Sigmoid colon (tissue), 7 donors: ENCODE measurements at regions of chr4 and their contacts with region 1.

Region 1: DNA sequence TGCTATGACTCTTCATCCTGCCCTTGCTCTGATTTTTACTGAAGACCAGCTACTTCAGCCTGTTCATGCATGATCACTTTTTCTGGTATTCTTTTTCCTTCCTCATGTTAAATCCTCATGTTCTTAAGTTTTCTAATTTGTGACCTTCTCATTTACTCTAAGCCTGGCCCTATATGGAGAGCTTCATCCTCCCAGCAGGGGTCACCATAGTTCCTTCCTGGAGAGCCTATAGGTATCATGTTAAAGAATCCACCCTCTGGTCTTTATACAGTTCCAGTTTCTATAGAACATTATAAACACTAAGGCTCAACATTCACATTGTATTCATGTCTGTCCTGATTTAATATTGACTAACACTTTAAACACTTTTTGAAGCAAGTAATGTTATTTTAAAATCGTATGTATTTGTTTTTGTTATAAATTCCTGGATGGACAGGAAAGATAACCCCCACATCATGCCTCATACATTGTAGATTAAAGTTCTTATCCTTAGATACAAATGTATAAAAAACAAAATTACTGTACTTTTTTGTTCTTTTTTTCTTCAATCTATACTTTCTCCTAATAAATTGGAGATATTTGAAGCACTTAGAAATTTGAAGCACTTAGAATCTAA is 53.8 kb upstream of the OTUD4 start:
- DNase-seq: no peak
- H3K4me3 ChIP-seq: no peak overlapping the region
- H3K27ac ChIP-seq: no peak overlapping the region
- H3K4me1 ChIP-seq: no peaks in the 10 kb centered on the region
- H3K27me3 ChIP-seq: no peaks in the 10 kb centered on the region
- CTCF ChIP-seq: peak; percentile 7 to 74 (median 41)
- EP300 ChIP-seq: no peak
- POLR2A ChIP-seq: no peak

Region 2: GRCh38 chr4:145099653-145100052 is 134.5 kb before region 1 on chr4:
- intact Hi-C with region 1: no loop called
- DNase-seq: no peak
- H3K4me3 ChIP-seq: peak overlapping the region in 2 of 4 donors; percentile 69 to 81
- H3K27ac ChIP-seq: no peak overlapping the region
- H3K4me1 ChIP-seq: peaks cover 0 to 53% (median 43%) of the 10 kb centered on the region in 4 donors
- H3K27me3 ChIP-seq: no peaks in the 10 kb centered on the region
- CTCF ChIP-seq: no peak
- EP300 ChIP-seq: no peak
- POLR2A ChIP-seq: no peak

Region 3: DNA sequence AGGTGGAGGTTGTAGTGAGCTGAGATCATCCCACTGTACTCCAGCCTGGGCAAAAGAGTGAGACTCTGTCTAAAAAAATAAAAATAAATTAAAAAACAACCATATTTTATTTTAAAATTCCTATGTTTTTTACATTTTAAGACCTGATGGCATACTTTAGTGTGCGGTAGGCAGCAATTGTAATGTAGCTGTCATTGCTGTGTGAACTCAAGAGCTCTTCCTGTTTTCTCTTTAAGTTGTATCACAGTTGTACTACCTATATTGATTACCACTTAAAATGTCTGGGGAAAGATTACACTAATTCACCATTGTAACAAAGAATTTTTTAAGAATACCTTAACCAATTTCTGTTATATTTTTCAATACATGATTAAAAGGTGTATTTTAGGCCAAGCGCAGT is 108.8 kb before region 1 on chr4:
- intact Hi-C with region 1: no loop called
- DNase-seq: no peak
- H3K4me3 ChIP-seq: no peak overlapping the region
- H3K27ac ChIP-seq: no peak overlapping the region
- H3K4me1 ChIP-seq: no peaks in the 10 kb centered on the region
- H3K27me3 ChIP-seq: no peaks in the 10 kb centered on the region
- CTCF ChIP-seq: no peak
- EP300 ChIP-seq: no peak
- POLR2A ChIP-seq: no peak

Region 4: GRCh38 chr4:145557720-145558119 is 323.5 kb after region 1 on chr4:
- intact Hi-C with region 1: loop called (anchors 2 kb)
- DNase-seq: peak; percentile 79
- H3K4me3 ChIP-seq: no peak overlapping the region
- H3K27ac ChIP-seq: no peak overlapping the region
- H3K4me1 ChIP-seq: peaks cover 0 to 3% (median 0%) of the 10 kb centered on the region in 4 donors
- H3K27me3 ChIP-seq: no peaks in the 10 kb centered on the region
- CTCF ChIP-seq: peak; percentile 50 to 91 (median 79)
- EP300 ChIP-seq: no peak
- POLR2A ChIP-seq: no peak

Region 5: GRCh38 chr4:145609481-145610427 is 375.6 kb after region 1 on chr4:
- intact Hi-C with region 1: loop called (anchors 5 kb)
- DNase-seq: no peak
- H3K4me3 ChIP-seq: no peak overlapping the region
- H3K27ac ChIP-seq: no peak overlapping the region
- H3K4me1 ChIP-seq: no peaks in the 10 kb centered on the region
- H3K27me3 ChIP-seq: no peaks in the 10 kb centered on the region
- CTCF ChIP-seq: peak; percentile 6 to 66 (median 60)
- EP300 ChIP-seq: no peak
- POLR2A ChIP-seq: no peak